Uterus (tissue), 4 donors: ENCODE measurements at regions of chr6 and their contacts with region 1.

Region 1: GRCh38 chr6:7270320-7271204 is 42.4 kb downstream of the SSR1 start:
- DNase-seq: no peak
- H3K4me3 ChIP-seq: no peak overlapping the region
- H3K27ac ChIP-seq: no peak overlapping the region
- H3K4me1 ChIP-seq: no peaks in the 10 kb centered on the region
- H3K27me3 ChIP-seq: no peaks in the 10 kb centered on the region
- CTCF ChIP-seq: no peak
- POLR2A ChIP-seq: no peak

Region 2: GRCh38 chr6:6981681-6982327 is 288.8 kb before region 1 on chr6:
- intact Hi-C with region 1: no loop called
- DNase-seq: no peak
- H3K4me3 ChIP-seq: no peak overlapping the region
- H3K27ac ChIP-seq: no peak overlapping the region
- H3K4me1 ChIP-seq: no peaks in the 10 kb centered on the region
- H3K27me3 ChIP-seq: no peaks in the 10 kb centered on the region
- CTCF ChIP-seq: no peak
- POLR2A ChIP-seq: no peak

Region 3: DNA sequence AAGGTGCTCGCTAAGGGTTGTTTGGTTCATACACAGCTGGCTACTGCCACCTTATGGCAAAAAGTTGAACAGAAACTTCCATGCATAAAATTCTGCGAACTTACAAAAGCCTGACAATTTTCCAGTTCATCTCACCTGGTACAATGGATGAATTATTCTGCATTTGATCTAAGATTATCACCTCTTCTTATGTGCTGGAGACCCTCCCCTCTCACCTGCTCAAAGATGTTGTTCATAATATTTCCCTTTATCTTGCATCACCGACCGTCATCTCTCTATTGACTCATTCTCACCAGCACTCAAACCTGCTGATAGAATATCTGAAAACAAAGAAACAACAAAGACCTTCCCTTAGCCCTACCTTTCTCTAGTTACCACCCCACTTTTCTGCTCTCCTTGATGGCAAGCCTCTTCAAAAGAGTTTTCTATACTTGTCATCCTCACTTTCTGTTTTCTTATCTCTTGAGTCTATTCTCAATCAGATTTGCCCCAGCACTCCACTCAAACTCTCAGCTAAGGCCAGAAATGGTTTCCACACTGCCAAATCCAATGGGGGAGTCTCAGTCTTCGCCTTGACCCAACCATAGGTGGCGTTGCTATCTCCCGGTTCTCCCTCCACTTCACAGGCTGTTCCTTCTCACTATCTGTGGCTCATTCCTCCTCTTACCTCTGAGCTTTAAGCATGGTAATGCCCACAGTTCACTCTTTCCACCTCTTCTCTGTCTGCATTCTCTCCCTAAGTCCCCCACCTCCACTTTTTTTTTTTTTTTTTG is 345.2 kb after region 1 on chr6:
- intact Hi-C with region 1: loop called (anchors 10 kb)
- DNase-seq: no peak
- H3K4me3 ChIP-seq: no peak overlapping the region
- H3K27ac ChIP-seq: no peak overlapping the region
- H3K4me1 ChIP-seq: no peaks in the 10 kb centered on the region
- H3K27me3 ChIP-seq: no peaks in the 10 kb centered on the region
- CTCF ChIP-seq: peak; percentile 67 to 74 (median 68)
- POLR2A ChIP-seq: no peak